GM13976 (cell line): ENCODE measurements at regions of chr6 and their contacts with region 1.

Region 1: GRCh38 chr6:154156135-154156896 is 117.3 kb downstream of the OPRM1 start:
- DNase-seq: peak; percentile 34
- CTCF ChIP-seq: peak; percentile 50

Region 2: GRCh38 chr6:154276810-154277628 is 120.7 kb after region 1 on chr6:
- in situ Hi-C with region 1: loop called (anchors 5 kb)
- DNase-seq: peak; percentile 55
- CTCF ChIP-seq: peak; percentile 38

Region 3: GRCh38 chr6:154367839-154368695 is 211.8 kb after region 1 on chr6:
- in situ Hi-C with region 1: loop called (anchors 10 kb)
- DNase-seq: no peak
- CTCF ChIP-seq: no peak

Region 4: DNA sequence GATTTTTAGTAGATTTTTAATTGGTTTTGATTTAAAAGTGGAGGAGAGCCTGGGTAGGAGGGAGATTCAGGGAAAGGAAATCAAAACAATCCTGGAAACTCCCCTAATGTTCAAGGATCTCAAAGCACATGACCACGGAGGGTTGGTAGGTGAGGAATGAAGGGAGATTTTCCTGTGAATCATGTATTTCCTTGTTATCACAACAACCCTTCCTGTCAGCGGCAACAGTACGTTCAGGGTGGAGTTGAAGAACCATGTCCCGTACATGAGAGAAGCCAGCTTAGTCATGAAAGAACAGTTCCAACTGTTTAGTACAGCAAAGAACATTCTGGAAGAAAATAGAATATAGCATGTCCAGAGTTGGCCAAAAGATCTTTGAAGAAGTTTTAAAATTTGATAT is 497.5 kb after region 1 on chr6:
- in situ Hi-C with region 1: loop called (anchors 25 kb)
- DNase-seq: no peak
- CTCF ChIP-seq: no peak